ENCODE measurements at regions of chr5 and their contacts with region 1.

Region 1: GRCh38 chr5:138078006-138078643 is 5.7 kb upstream of the WNT8A start:
- DNase-seq: no peak

Region 2: DNA sequence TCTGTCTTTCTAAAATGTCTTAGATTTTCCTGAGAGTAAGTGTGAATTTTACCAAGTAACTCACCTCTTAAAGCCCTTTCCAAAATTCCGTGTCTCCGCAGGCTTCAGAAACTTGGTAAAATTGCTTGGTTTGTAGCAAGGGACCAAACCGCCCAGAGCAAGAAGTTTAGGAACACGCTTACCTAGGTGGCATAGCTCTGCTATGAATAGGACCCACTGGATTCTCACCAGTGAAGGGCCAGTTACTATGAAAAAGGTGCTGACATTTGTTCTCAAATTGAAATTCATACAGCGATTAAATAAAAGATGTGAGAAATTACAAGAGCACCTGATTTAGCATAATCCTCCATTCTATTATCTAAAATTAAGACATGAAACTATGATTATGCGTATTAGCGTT is 54.4 kb after region 1 on chr5:
- intact Hi-C with region 1: loop called (anchors 2 kb)
- DNase-seq: no peak